BJ (cell line): ENCODE measurements at regions of chr5 and their contacts with region 1.

Region 1: DNA sequence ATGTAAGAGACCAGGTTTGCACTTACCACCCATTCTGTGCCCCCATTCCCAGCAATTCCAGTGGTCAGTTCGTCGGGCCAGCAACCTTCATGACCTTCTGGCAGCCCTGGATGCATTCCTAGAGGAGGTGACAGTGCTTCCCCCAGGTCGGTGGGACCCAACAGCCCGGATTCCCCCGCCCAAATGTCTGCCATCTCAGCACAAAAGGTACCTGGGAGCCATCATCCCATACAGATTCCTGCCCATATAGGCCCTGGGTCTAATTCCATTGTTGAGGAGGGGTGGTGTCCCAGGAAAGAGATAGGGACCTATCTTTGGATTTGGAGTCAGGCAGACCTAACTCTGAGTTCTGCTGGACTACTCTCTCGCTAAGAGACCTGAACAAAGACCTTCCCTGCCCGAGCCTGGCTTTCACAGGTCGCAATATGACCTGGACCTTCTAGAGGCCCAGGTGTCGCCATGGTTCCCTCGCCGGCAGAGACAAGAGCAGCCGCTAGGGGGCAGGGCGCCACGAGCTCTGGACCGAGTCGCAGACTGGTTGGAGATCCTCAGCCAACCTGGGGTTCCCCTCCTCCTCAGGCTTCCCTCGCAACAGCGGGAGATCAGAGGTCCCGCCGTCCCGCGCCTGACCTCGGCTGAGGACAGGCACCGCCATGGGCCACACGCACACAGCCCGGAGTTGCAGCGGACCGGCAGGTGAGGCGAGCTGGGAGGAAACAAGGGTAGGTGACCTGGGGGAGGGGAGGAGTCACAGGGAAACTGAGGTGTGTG is 3.1 kb downstream of the SLC4A9 start:
- DNase-seq: no peak
- H3K4me3 ChIP-seq: peak overlapping the region; percentile 29
- H3K27me3 ChIP-seq: no peaks in the 10 kb centered on the region
- CTCF ChIP-seq: peak; percentile 94

Region 2: DNA sequence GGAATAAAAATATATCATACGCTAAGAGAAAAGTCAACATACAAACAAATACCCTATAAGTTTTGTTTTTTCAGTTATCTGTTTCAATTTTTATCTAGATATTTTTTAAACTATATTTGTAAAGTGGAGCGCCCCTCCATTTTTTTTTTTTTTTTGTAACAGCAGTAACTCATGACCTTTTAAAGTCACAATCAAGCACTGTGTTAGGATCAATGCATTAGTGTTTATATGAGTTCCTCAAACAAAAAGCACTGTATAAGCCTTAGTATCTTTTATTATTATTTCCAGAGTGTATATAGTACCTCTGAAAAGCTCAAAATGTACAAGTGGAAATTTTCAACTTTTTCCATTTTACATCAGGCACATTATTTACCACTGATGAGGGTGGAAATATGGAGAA is 80.8 kb before region 1 on chr5:
- CTCF ChIA-PET with region 1: no interaction called
- POLR2A ChIA-PET with region 1: no interaction called
- DNase-seq: no peak
- H3K4me3 ChIP-seq: no peak overlapping the region
- H3K27me3 ChIP-seq: no peaks in the 10 kb centered on the region
- CTCF ChIP-seq: no peak

Region 3: GRCh38 chr5:140351609-140352334 is 11.3 kb before region 1 on chr5:
- CTCF ChIA-PET with region 1: interaction called, 28 read pairs
- POLR2A ChIA-PET with region 1: no interaction called
- DNase-seq: no peak
- H3K4me3 ChIP-seq: no peak overlapping the region
- H3K27me3 ChIP-seq: no peaks in the 10 kb centered on the region
- CTCF ChIP-seq: peak; percentile 80

Region 4: GRCh38 chr5:140391312-140391711 is 28.3 kb after region 1 on chr5:
- CTCF ChIA-PET with region 1: interaction called, 10 read pairs
- POLR2A ChIA-PET with region 1: interaction called, 29 read pairs
- DNase-seq: no peak
- H3K4me3 ChIP-seq: no peak overlapping the region
- H3K27me3 ChIP-seq: no peaks in the 10 kb centered on the region
- CTCF ChIP-seq: no peak

Region 5: DNA sequence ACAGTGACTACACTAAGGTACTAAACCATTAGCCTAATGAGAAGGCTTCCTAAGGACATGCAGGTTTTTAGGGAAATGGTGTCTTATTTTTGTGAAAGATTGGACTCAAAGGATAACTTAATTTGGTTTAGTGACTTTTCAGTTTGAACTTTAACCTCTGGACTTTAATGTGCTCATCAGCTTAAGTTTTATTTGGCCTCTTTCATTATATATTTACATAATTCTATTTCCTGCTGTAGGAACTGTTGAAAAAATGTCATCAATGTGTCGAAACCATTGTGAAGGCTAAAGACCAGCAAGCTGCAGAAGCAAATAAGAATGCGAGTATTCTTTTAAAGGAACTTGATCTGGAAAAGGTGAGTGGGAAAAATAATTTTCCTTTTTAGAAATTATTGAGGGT is 150.1 kb after region 1 on chr5:
- CTCF ChIA-PET with region 1: no interaction called
- POLR2A ChIA-PET with region 1: no interaction called
- DNase-seq: no peak
- H3K4me3 ChIP-seq: no peak overlapping the region
- H3K27me3 ChIP-seq: no peaks in the 10 kb centered on the region
- CTCF ChIP-seq: no peak

Region 6: GRCh38 chr5:140718241-140718580 is 355.2 kb after region 1 on chr5:
- CTCF ChIA-PET with region 1: interaction called, 20 read pairs
- POLR2A ChIA-PET with region 1: no interaction called
- DNase-seq: no peak
- H3K4me3 ChIP-seq: no peak overlapping the region; the same call in 1 of the 2 replicates
- H3K27me3 ChIP-seq: 0 out of 2 replicates have a peak, but pooled peaks cover 1% of the 10 kb centered on the region
- CTCF ChIP-seq: no peak